ENCODE measurements at regions of chr21 and their contacts with region 1.

Region 1: DNA sequence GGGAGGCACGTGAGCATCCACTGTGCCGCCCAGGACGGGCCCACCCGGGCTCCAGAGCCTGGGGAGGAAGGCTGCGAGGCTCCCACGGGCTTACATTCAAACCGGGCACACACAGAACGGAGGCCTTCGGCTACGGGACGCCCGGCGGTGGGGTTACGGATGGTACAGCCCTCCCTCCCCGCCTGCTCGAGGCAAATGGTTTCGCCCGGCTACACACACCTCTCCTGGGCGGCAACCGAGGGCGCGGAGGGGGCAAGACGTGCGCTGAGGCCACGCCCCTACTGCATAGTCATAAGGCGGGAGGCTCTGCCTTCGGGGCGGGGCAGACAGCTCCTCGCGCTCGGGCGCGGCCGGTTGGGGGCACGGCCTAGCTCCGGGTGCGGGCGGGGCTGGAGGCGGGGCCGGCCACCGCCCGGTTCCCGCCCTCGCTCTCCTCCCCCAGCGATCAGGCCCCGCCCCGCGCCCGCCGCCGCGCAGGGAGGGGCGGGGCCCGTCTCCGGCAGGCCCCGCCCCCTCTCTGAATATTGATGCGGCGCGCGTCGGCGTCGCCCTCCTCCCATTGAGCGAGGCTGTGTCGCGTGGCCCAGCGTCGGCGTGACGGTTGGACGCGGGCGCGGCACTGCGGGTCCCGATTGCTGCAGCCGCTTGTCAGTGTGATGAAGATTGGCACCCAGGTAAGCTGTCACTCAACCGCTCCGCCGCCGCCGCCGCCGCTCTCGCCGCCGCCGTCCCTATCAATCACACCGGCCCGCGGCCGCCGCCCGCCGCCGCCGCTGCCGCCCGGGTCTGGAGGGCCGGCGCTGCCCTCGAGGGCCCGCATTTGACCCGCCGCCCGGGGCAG is at the start of gene PKNOX1:
- DNase-seq: peak; percentile 98
- ATAC-seq: peak; percentile 85
- H3K4me3 Mint-ChIP-seq: peak within 1 kb of the TSS; percentile 89
- H3K27ac Mint-ChIP-seq: peak within 1 kb of the TSS; percentile 86
- H3K4me1 Mint-ChIP-seq: peaks cover 26% of the 10 kb centered on the region
- H3K27me3 Mint-ChIP-seq: no peaks in the 10 kb centered on the region
- CTCF ChIP-seq: no peak
- total RNA-seq, gene PKNOX1: 13.3 and 15.6 TPM in 2 replicates

Region 2: GRCh38 chr21:41548781-41549180 is 1425.4 kb before region 1 on chr21:
- CTCF ChIA-PET with region 1: no interaction called
- POLR2A ChIA-PET with region 1: no interaction called
- intact Hi-C with region 1: no loop called
- DNase-seq: no peak
- ATAC-seq: no peak
- H3K4me3 Mint-ChIP-seq: no peak overlapping the region
- H3K27ac Mint-ChIP-seq: no peak overlapping the region
- H3K4me1 Mint-ChIP-seq: peaks cover 8% of the 10 kb centered on the region
- H3K27me3 Mint-ChIP-seq: peaks cover 4% of the 10 kb centered on the region
- CTCF ChIP-seq: no peak

Region 3: DNA sequence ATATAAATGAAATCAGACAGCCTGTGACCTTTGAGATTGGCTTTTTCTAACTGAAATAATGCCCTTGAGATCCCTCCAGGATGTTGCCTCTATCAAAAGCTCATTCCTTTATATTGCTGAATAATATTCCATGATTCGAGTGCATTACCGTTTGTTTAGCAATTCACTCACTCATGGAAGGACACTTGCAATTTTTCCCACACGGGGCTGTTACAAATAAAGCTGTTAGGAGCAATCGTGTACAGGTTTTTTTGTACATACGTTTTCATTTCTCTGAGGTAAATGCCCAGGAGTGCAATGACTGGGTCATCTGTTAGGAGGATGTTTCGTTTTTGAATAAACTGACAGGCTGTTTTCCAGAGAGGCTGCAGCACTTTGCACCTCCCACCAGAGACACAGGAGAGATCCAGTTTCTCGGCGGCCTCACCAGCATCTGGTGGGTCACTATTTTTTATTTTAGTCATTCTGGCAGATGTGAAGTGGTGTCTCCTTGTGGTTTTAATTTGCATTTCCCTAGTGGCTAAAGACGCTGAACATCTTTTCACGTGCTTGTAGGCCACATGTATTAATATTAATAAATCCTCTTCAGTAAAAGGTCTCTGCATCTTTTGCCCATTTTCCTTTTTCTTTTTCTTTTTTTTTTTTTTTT is 1106.0 kb before region 1 on chr21:
- CTCF ChIA-PET with region 1: no interaction called
- POLR2A ChIA-PET with region 1: no interaction called
- intact Hi-C with region 1: loop called (anchors 5 kb)
- DNase-seq: no peak
- ATAC-seq: peak; percentile 81
- H3K4me3 Mint-ChIP-seq: peak overlapping the region; percentile 64
- H3K27ac Mint-ChIP-seq: peak overlapping the region; percentile 50
- H3K4me1 Mint-ChIP-seq: peaks cover 64% of the 10 kb centered on the region
- H3K27me3 Mint-ChIP-seq: no peaks in the 10 kb centered on the region
- CTCF ChIP-seq: no peak

Region 4: DNA sequence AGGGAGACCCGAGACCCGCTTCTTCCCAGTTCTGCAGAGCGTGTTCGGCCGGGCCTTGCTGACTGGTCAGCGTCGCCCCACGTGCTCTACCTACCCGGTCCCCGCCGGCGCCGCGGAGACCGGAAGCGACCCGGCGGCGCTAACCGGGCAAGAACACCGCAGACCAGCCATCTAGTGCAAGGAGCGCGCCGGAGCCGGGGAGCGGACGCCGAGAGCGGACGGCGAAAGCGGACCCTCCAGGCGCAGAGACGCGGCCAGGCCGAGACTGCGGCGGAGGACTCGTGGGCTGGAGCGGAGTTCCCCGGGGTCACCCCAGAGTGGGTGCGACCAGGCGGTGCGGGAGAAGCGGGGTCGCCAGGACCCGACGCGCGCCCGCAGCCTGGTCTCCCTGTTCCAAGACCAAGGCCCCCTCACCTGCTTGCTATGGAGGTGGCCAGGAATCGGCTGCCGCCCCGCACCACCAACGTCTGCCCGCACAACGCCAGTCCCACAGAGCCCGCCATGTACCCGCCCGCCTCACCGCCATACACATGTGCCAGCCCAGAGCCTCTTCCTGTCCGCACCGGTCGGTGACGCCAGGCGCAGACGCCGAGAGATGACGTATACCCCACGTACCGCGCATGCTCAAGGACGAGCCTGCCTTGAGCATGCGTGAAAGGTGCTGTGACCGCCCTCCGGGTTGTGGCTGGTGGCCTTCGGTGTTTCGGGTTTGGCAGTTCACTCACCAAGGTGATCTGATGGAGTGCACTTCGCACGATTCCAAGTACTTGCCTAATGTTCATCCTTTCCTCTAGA is 95.0 kb before region 1 on chr21 and contains the start of gene WDR4:
- CTCF ChIA-PET with region 1: no interaction called
- POLR2A ChIA-PET with region 1: no interaction called
- intact Hi-C with region 1: loop called (anchors 1 kb)
- DNase-seq: peak; percentile 99
- ATAC-seq: peak; percentile 88
- H3K4me3 Mint-ChIP-seq: peak within 1 kb of the TSS; percentile 91
- H3K27ac Mint-ChIP-seq: peak within 1 kb of the TSS; percentile 95
- H3K4me1 Mint-ChIP-seq: peaks cover 23% of the 10 kb centered on the region
- H3K27me3 Mint-ChIP-seq: no peaks in the 10 kb centered on the region
- CTCF ChIP-seq: no peak
- total RNA-seq, gene WDR4: 56.7 and 60.5 TPM in 2 replicates

Region 5: GRCh38 chr21:42923541-42924432 is 50.4 kb before region 1 on chr21:
- CTCF ChIA-PET with region 1: no interaction called
- POLR2A ChIA-PET with region 1: no interaction called
- intact Hi-C with region 1: loop called (anchors 10 kb)
- DNase-seq: peak; percentile 32
- ATAC-seq: peak; percentile 96
- H3K4me3 Mint-ChIP-seq: peak overlapping the region; percentile 42
- H3K27ac Mint-ChIP-seq: peak overlapping the region; percentile 71
- H3K4me1 Mint-ChIP-seq: peaks cover 12% of the 10 kb centered on the region
- H3K27me3 Mint-ChIP-seq: no peaks in the 10 kb centered on the region
- CTCF ChIP-seq: no peak

Region 6: GRCh38 chr21:42939582-42940410 is 34.4 kb before region 1 on chr21:
- CTCF ChIA-PET with region 1: no interaction called
- POLR2A ChIA-PET with region 1: no interaction called
- intact Hi-C with region 1: no loop called
- DNase-seq: no peak
- ATAC-seq: no peak
- H3K4me3 Mint-ChIP-seq: no peak overlapping the region
- H3K27ac Mint-ChIP-seq: no peak overlapping the region
- H3K4me1 Mint-ChIP-seq: peaks cover 12% of the 10 kb centered on the region
- H3K27me3 Mint-ChIP-seq: no peaks in the 10 kb centered on the region
- CTCF ChIP-seq: no peak

Region 7: GRCh38 chr21:43012595-43012994 is 38.4 kb after region 1 on chr21:
- CTCF ChIA-PET with region 1: no interaction called
- POLR2A ChIA-PET with region 1: no interaction called
- intact Hi-C with region 1: no loop called
- DNase-seq: no peak
- ATAC-seq: no peak
- H3K4me3 Mint-ChIP-seq: no peak overlapping the region
- H3K27ac Mint-ChIP-seq: no peak overlapping the region
- H3K4me1 Mint-ChIP-seq: peaks cover 24% of the 10 kb centered on the region
- H3K27me3 Mint-ChIP-seq: no peaks in the 10 kb centered on the region
- CTCF ChIP-seq: no peak

Region 8: DNA sequence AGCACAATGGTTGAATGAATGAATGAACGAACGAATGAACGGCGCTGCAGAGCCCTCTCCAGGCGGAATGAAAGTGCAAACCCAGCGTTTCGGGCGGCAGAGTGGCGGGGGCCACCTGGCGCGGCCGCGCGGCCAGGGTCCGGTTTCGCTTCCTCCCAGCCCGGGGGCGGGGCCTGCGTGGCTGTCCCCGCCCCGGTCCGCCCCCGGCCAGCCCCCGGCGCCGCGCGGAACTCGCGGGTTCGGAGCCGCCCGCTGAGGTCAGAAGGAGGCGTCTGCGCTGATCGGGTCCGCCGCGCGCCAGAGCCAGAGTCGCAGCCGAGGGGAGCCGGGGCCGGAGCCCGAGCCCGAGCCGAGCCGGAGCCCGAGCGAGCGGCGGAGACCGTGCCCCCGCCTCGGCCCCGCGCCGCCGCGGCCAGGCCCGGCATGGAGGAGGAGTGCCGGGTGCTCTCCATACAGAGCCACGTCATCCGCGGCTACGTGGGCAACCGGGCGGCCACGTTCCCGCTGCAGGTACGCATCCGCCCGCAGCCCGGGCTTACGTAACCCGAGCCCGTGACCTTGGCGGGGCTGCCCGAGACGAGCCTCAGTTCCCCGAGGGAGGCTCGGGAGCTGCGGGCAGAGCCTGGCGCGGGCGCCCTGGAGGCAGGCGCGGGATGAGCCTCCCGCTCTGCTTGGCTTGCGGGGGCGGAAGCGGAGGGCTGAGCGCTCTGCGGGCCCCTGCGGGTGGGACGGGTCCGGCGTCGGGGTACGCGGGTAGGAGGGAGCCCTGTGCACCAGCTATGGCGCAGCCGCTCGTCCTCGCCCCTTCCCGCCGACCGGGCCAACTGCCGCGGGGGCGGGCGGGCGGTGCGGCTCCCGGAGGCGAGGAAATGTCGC is 744.9 kb after region 1 on chr21 and contains the start of gene PDXK:
- CTCF ChIA-PET with region 1: no interaction called
- POLR2A ChIA-PET with region 1: no interaction called
- intact Hi-C with region 1: loop called (anchors 10 kb)
- DNase-seq: peak; percentile 93
- ATAC-seq: peak; percentile 80
- H3K4me3 Mint-ChIP-seq: peak within 1 kb of the TSS; percentile 81
- H3K27ac Mint-ChIP-seq: peak within 1 kb of the TSS; percentile 71
- H3K4me1 Mint-ChIP-seq: peaks cover 58% of the 10 kb centered on the region
- H3K27me3 Mint-ChIP-seq: no peaks in the 10 kb centered on the region
- CTCF ChIP-seq: no peak
- total RNA-seq, gene PDXK: 45.2 and 54.2 TPM in 2 replicates

Measured in activated B cell treated with CpG ODN at 0.5 μM for 24 hours (primary cell).